Heart left ventricle (tissue), 16 donors: ENCODE measurements at regions of chr1 and their contacts with region 1.

Region 1: GRCh38 chr1:183039985-183040447 is 16.8 kb downstream of the LAMC1 start:
- DNase-seq: no peak
- ATAC-seq: peak in 3 of 4 donors; percentile 49 to 67 (median 50)
- H3K4me3 ChIP-seq: no peak overlapping the region
- H3K27ac ChIP-seq: peak overlapping the region; percentile 18 to 69 (median 54)
- H3K4me1 ChIP-seq: peaks cover 8 to 88% (median 60%) of the 10 kb centered on the region in 12 donors
- H3K27me3 ChIP-seq: no peaks in the 10 kb centered on the region
- CTCF ChIP-seq: no peak
- POLR2A ChIP-seq: no peak

Region 2: GRCh38 chr1:183101841-183102276 is 61.8 kb after region 1 on chr1:
- intact Hi-C with region 1: loop called in 1 of 10 experiments (anchors 5 kb)
- DNase-seq: peak in 1 of 5 donors; percentile 44
- ATAC-seq: peak in 3 of 4 donors; percentile 40 to 52 (median 51)
- H3K4me3 ChIP-seq: peak overlapping the region in 1 of 12 donors; percentile 10
- H3K27ac ChIP-seq: peak overlapping the region in 3 of 12 donors; percentile 3 to 15 (median 4)
- H3K4me1 ChIP-seq: peaks cover 0 to 93% (median 68%) of the 10 kb centered on the region in 12 donors
- H3K27me3 ChIP-seq: no peaks in the 10 kb centered on the region
- CTCF ChIP-seq: no peak
- POLR2A ChIP-seq: no peak

Region 3: GRCh38 chr1:183173828-183174227 is 133.8 kb after region 1 on chr1:
- intact Hi-C with region 1: no loop called
- DNase-seq: no peak
- ATAC-seq: no peak
- H3K4me3 ChIP-seq: no peak overlapping the region
- H3K27ac ChIP-seq: no peak overlapping the region
- H3K4me1 ChIP-seq: peaks cover 0 to 9% (median 1%) of the 10 kb centered on the region in 12 donors
- H3K27me3 ChIP-seq: no peaks in the 10 kb centered on the region
- CTCF ChIP-seq: no peak
- POLR2A ChIP-seq: no peak

Region 4: DNA sequence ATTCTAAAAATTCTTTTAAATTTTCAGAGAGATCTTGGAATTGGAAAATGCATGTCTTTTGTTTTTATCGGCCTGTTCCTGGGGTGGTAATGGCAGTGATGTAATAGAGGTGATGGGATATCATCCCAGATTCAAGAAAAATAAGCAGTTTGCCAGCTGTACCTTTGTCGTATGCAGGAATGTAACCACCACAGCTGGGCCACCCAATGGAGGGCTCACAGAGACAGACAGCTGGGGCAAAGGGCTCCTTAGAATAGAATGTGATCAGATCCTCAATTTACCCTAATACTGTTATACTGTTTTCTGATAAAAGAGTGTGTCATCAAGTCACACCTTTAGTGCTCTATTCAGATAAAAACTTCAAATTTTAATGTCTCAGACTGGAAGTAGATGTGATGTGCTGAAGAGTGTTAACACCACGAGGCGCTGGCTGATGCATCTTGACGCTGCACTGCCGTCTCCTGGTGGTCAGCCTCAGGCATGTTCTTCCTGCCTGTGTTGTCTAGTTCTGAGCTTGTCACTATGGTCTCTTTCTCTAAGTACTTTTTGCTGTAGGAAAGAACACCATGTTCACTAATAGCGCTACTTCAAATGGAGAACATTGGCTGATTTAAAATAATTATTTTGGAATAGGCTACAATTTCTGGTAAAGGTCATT is 1425.6 kb after region 1 on chr1:
- intact Hi-C with region 1: loop called in 1 of 10 experiments (anchors 10 kb)
- DNase-seq: peak in 2 of 5 donors; percentile 60 to 66
- ATAC-seq: peak; percentile 65 to 84 (median 74)
- H3K4me3 ChIP-seq: no peak overlapping the region
- H3K27ac ChIP-seq: peak overlapping the region in 5 of 12 donors; percentile 23 to 59 (median 45)
- H3K4me1 ChIP-seq: peaks cover 2 to 66% (median 34%) of the 10 kb centered on the region in 12 donors
- H3K27me3 ChIP-seq: no peaks in the 10 kb centered on the region
- CTCF ChIP-seq: peak in 11 of 12 donors; percentile 6 to 58 (median 39)
- POLR2A ChIP-seq: no peak